GM18951 (cell line): ENCODE measurements at regions of chr1 and their contacts with region 1.

Region 1: GRCh38 chr1:6727535-6727934 is 25.9 kb upstream of the DNAJC11 start:
- POLR2A ChIP-seq: no peak

Region 2: GRCh38 chr1:6770751-6771440 is 43.4 kb after region 1 on chr1:
- in situ Hi-C with region 1: loop called (anchors 5 kb)
- POLR2A ChIP-seq: no peak

Region 3: GRCh38 chr1:6854165-6854564 is 126.6 kb after region 1 on chr1:
- in situ Hi-C with region 1: no loop called
- POLR2A ChIP-seq: no peak

Region 4: DNA sequence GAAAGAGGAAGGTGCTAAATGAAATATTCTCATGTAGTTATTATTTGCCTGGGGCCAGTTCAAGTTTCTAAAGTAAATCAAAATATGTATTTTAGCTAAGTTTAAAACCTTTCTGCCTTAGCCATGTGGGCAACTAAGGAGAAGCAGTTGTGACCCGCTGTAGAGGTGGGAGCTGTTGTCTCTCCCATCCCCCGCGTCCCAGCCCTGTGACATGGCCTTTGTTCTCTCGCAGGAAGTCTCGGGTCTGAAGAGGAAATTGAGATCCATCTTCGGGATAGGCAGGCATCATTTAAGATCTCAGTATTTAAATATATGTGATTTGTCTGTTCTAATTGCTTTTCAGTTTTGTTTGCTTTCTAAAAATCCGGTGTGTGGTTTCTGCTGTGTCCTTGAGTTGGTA is 179.2 kb after region 1 on chr1:
- in situ Hi-C with region 1: loop called (anchors 10 kb)
- POLR2A ChIP-seq: no peak